MCF 10A (cell line): ENCODE measurements at regions of chr18 and their contacts with region 1.

Region 1: DNA sequence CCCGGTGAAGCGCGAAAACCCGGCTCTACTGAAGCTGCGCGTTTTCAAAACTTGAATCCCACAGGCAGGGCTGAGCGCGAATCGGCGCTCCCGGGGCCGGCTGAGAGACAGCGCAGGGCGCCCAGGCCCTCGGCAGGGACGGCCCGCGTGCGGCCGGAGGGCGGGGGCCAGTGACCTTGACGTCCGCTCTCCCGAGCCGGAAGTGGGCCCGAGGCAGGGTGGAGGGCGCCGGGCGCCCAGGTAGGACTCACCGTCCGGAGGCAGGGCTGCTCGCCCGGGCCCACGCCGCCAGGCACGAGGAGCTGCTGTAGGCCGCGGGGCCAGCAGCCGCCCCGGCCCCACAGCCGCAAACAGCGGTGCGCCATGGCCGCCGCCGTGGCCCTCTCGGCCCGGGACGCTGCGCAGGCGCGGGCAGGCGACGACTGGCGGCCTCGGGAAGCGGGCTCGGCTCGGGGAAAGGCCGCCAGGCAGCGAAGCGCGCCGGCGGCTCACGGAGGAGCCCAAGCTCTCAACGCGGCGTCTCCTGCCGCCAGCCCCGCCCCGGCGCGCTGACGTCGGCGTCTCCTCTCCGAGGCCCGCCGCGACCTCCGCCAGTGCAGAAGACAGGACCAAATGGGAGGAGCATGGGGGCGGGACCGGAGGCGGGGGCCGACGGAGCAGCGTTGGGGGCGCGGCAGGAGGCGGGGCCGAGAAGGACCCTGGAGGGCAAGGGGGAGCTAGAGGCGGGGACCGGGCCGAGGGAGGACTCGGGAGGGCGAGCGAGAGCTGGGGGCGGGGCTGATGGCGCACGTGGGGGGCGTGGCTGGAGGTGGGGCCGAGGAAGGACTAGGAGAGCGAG is at the start of gene AFG3L2:
- DNase-seq: peak; percentile 98
- H3K4me3 Mint-ChIP-seq: peak within 1 kb of the TSS; percentile 85
- H3K27ac Mint-ChIP-seq: peak within 1 kb of the TSS; percentile 90
- H3K4me1 Mint-ChIP-seq: peaks cover 24% of the 10 kb centered on the region
- H3K27me3 Mint-ChIP-seq: no peaks in the 10 kb centered on the region
- CTCF ChIP-seq: no peak
- total RNA-seq, gene AFG3L2: 56.7 and 77.2 TPM in 2 replicates

Region 2: GRCh38 chr18:12236934-12237832 is 139.8 kb before region 1 on chr18:
- CTCF ChIA-PET with region 1: no interaction called
- POLR2A ChIA-PET with region 1: no interaction called
- intact Hi-C with region 1: no loop called
- DNase-seq: peak; percentile 65
- H3K4me3 Mint-ChIP-seq: no peak overlapping the region
- H3K27ac Mint-ChIP-seq: no peak overlapping the region
- H3K4me1 Mint-ChIP-seq: peaks cover 7% of the 10 kb centered on the region
- H3K27me3 Mint-ChIP-seq: peaks cover 21% of the 10 kb centered on the region
- CTCF ChIP-seq: peak; percentile 88

Region 3: GRCh38 chr18:12308386-12309100 is 68.4 kb before region 1 on chr18:
- CTCF ChIA-PET with region 1: no interaction called
- POLR2A ChIA-PET with region 1: interaction called, 22 read pairs
- intact Hi-C with region 1: no loop called
- DNase-seq: peak; percentile 85
- H3K4me3 Mint-ChIP-seq: peak overlapping the region; percentile 86
- H3K27ac Mint-ChIP-seq: peak overlapping the region; percentile 87
- H3K4me1 Mint-ChIP-seq: peaks cover 20% of the 10 kb centered on the region
- H3K27me3 Mint-ChIP-seq: no peaks in the 10 kb centered on the region
- CTCF ChIP-seq: no peak

Region 4: DNA sequence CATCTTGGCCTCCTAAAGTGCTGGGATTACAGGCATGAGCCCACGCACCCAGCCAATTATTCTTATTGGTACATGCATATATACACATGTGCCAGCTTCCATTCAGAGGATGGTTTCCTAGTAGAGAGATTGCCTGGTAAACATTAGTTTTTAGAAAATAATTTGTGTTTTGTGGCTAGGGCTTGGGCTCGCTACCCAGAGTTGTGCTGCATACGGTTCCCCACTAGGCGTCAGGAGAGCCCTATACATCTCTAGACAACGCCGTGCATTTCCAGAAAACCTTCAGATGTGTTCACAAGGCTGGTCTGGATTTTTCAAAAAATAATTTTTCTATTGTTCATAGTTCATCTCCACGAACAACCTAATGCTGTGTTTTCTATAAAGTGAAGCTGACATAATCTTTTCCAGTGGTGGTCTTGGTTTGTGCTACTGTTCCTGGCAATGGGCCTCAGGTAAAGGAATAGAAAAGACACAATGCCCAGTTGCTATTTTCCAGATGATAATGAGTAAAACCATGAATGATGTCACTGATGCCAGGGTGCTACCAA is 14.8 kb after region 1 on chr18:
- CTCF ChIA-PET with region 1: interaction called, 16 read pairs
- POLR2A ChIA-PET with region 1: interaction called, 6 read pairs
- intact Hi-C with region 1: no loop called
- DNase-seq: peak; percentile 75
- H3K4me3 Mint-ChIP-seq: no peak overlapping the region
- H3K27ac Mint-ChIP-seq: no peak overlapping the region
- H3K4me1 Mint-ChIP-seq: peaks cover 6% of the 10 kb centered on the region
- H3K27me3 Mint-ChIP-seq: no peaks in the 10 kb centered on the region
- CTCF ChIP-seq: peak; percentile 91

Region 5: DNA sequence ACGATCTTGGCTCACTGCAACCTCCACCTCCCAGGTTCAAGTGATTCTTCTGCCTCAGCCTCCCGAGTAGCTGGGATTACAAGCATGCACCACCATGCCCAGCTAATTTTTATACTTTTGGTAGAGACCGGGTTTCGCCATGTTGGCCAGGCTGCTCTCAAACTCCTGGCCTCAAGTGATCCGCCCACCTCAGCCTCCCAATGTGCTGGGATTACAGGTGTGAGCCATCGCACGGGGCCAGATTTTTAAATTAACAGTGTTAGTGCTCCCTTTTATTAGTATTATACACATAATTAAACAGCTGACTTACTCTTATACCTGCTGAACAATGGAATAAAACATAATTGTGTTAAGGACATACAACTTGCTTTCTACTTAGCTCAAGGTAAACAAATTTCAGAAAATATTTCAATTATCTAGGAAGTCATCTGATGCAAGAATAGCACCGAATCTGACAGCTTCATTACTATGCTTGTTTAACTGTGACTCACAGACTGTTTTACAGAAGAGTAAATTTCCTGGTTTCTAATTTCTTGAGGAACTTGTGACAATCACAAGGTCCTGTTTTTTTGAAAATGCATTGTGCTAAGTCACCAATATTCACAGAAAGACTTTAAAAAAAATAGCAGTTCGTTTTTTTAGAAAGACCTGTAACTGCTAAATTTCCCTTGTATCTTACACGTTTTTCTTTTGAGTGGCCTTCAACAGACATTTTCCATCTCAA is 229.8 kb after region 1 on chr18:
- CTCF ChIA-PET with region 1: no interaction called
- POLR2A ChIA-PET with region 1: interaction called, 11 read pairs
- intact Hi-C with region 1: no loop called
- DNase-seq: peak; percentile 69
- H3K4me3 Mint-ChIP-seq: peak overlapping the region; percentile 58
- H3K27ac Mint-ChIP-seq: peak overlapping the region; percentile 99
- H3K4me1 Mint-ChIP-seq: peaks cover 54% of the 10 kb centered on the region
- H3K27me3 Mint-ChIP-seq: no peaks in the 10 kb centered on the region
- CTCF ChIP-seq: no peak

Region 6: GRCh38 chr18:12702221-12703095 is 325.5 kb after region 1 on chr18 and contains the starts of genes CEP76 and PSMG2:
- CTCF ChIA-PET with region 1: no interaction called
- POLR2A ChIA-PET with region 1: interaction called, 20 read pairs
- intact Hi-C with region 1: no loop called
- DNase-seq: peak; percentile 90
- H3K4me3 Mint-ChIP-seq: peak within 1 kb of the TSS; percentile 100
- H3K27ac Mint-ChIP-seq: peak within 1 kb of the TSS; percentile 100
- H3K4me1 Mint-ChIP-seq: peaks cover 45% of the 10 kb centered on the region
- H3K27me3 Mint-ChIP-seq: no peaks in the 10 kb centered on the region
- CTCF ChIP-seq: no peak
- total RNA-seq, gene CEP76: 4.9 and 6.4 TPM in 2 replicates
- total RNA-seq, gene PSMG2: 88.6 and 100 TPM in 2 replicates

Region 7: DNA sequence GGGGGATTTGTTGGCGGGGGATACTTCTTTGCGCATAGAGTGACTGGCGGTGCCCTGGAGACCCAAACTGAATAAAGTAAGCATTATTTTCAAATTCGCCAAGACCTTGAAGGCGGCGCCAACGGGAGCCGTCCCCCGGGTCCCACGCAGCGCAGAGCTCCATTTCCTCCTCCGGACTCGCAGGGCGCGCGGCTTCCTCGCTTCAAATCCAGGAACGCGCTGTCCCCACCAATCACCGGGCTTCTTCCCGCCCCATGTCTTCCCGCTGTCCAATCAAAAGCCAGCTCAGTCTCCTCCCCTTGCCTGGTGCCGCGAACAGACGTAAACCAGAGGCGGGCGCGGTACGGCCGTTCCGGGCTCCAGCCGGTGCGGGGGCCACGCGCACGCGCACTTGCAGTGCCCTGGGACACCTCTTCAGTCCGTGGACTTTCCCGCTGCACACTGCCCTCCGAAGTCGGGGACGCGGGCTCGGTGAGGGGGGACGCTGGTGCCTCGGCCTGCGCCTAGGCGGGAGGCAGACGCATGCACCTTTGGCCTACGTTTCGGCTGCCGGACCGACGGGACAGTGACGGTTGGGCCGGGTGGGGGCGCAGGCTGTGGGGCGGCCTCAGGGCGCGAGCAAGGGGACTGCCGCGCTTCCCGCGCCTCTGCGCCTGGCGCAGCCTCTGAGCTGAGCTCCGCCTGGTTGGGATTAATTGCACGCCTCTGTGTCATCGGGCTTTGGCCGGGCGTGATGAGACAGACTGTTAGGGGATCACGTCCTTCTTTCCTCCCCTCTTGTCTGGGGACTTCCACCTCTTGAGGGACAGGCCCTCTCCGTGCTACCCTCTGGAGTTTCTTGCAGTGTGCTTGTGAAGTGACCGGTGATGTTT is 614.3 kb after region 1 on chr18 and contains the start of gene CEP192:
- CTCF ChIA-PET with region 1: no interaction called
- POLR2A ChIA-PET with region 1: interaction called, 12 read pairs
- intact Hi-C with region 1: no loop called
- DNase-seq: peak; percentile 98
- H3K4me3 Mint-ChIP-seq: peak within 1 kb of the TSS; percentile 99
- H3K27ac Mint-ChIP-seq: peak within 1 kb of the TSS; percentile 83
- H3K4me1 Mint-ChIP-seq: peaks cover 21% of the 10 kb centered on the region
- H3K27me3 Mint-ChIP-seq: no peaks in the 10 kb centered on the region
- CTCF ChIP-seq: no peak
- total RNA-seq, gene CEP192: 14.3 and 15.2 TPM in 2 replicates